ENCODE measurements at regions of chr10 and their contacts with region 1.

Region 1: GRCh38 chr10:44310762-44311562 is 73.9 kb downstream of the CXCL12 start:
- DNase-seq: peak; percentile 92 to 95
- ATAC-seq: peak; percentile 96
- H3K4me3 ChIP-seq: no peak overlapping the region
- H3K27ac ChIP-seq: no peak overlapping the region
- H3K4me1 ChIP-seq: no peaks in the 10 kb centered on the region
- H3K27me3 ChIP-seq: no peaks in the 10 kb centered on the region

Region 2: DNA sequence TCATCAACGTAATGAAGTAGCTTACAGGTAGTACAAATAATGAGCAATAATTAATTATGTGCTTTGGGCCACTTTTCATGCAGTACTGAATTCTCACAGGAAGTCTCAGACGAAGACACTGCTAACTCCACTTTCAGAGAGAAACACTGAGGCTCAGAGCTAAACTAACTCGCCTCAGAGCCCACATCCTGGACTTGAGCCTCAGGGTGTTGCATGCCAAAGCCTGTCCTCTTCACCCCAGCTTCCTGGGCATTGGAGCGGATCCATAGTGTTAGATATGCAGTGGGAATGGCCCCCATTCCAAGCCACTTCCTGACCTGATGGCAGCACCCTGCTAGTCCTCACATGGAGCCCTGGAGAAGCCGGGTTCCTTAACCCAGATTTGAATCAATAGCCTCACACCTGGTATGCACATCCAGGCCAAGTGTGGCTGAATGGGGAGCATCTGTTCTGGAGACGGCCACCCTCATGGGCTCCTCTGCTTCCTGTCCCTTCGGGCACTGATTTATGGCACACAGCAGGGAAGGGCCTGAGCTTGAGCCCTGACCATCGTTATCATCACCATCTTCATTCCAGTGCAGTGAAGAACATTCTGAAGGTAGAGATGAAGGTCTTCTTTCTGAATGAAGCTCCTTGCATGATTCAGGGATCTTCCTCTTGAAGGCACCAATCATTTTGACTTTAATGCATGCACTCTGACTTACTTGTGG is 397.1 kb before region 1 on chr10:
- intact Hi-C with region 1: loop called in 1 of 2 experiments (anchors 5 kb)
- DNase-seq: no peak
- ATAC-seq: no peak
- H3K4me3 ChIP-seq: no peak overlapping the region
- H3K27ac ChIP-seq: no peak overlapping the region
- H3K4me1 ChIP-seq: peaks cover 0 to 4% of the 10 kb centered on the region in 2 donors
- H3K27me3 ChIP-seq: no peaks in the 10 kb centered on the region

Region 3: GRCh38 chr10:44071479-44071878 is 239.5 kb before region 1 on chr10:
- intact Hi-C with region 1: loop called in 1 of 2 experiments (anchors 10 kb)
- DNase-seq: no peak
- ATAC-seq: no peak
- H3K4me3 ChIP-seq: no peak overlapping the region
- H3K27ac ChIP-seq: peak overlapping the region in 1 of 2 donors; percentile 76
- H3K4me1 ChIP-seq: no peaks in the 10 kb centered on the region
- H3K27me3 ChIP-seq: no peaks in the 10 kb centered on the region

Region 4: GRCh38 chr10:44132361-44133289 is 178.3 kb before region 1 on chr10:
- intact Hi-C with region 1: no loop called
- DNase-seq: no peak
- ATAC-seq: peak; percentile 71
- H3K4me3 ChIP-seq: no peak overlapping the region
- H3K27ac ChIP-seq: no peak overlapping the region
- H3K4me1 ChIP-seq: no peaks in the 10 kb centered on the region
- H3K27me3 ChIP-seq: no peaks in the 10 kb centered on the region

Region 5: DNA sequence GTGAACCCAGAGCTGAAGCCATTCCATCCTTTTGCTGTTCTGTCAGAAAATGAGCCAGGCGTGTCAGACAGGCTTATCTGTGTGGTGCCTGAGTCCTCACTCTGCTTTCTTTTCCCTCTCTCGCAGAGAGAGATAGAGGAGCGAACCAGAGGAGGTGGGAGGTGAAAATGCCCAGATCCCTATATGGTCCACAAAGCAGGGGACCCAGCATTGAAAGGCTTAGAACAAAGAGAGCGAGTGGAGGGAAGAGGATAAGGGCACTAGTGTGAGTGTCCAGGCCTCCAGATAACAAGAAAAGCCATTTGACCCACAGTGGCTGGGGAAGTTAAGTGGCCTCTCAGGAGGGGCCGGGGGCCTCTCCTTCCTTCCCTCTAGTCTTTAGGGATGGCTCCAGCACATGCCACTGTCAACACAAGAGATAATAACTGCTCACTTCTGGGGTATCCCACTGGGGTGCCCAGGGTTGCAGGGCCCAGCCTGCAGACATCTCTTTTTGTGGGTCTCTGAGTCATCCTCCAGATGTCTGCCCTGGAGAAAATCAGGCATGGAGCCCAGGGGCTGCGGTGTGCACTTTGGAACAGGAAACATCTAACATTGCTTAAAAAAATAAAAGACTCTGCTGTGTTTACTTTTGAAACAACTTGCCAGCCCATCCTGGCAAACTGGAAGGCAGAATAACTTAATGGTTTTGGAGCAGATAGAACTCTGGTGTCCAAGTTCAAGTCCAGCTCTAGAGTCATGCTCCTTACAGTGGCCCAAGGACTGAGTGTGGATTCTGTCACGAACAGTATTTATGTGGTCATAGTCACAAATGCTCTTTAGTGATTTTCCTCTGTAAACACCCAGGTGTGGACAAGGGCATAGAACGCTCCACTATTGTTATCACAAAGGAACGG is 115.6 kb before region 1 on chr10:
- intact Hi-C with region 1: loop called in 1 of 2 experiments (anchors 5 kb)
- DNase-seq: peak; percentile 87 to 90
- ATAC-seq: peak; percentile 82
- H3K4me3 ChIP-seq: no peak overlapping the region
- H3K27ac ChIP-seq: peak overlapping the region in 1 of 2 donors; percentile 32
- H3K4me1 ChIP-seq: no peaks in the 10 kb centered on the region
- H3K27me3 ChIP-seq: no peaks in the 10 kb centered on the region

Region 6: GRCh38 chr10:44386546-44387052 is 75.6 kb after region 1 on chr10:
- intact Hi-C with region 1: loop called in 1 of 2 experiments (anchors 5 kb)
- DNase-seq: peak; percentile 74 to 90
- ATAC-seq: peak; percentile 90
- H3K4me3 ChIP-seq: no peak overlapping the region
- H3K27ac ChIP-seq: no peak overlapping the region
- H3K4me1 ChIP-seq: no peaks in the 10 kb centered on the region
- H3K27me3 ChIP-seq: no peaks in the 10 kb centered on the region

Region 7: GRCh38 chr10:44581996-44582395 is 271.0 kb after region 1 on chr10:
- intact Hi-C with region 1: no loop called
- DNase-seq: no peak
- ATAC-seq: peak; percentile 35
- H3K4me3 ChIP-seq: no peak overlapping the region
- H3K27ac ChIP-seq: no peak overlapping the region
- H3K4me1 ChIP-seq: no peaks in the 10 kb centered on the region
- H3K27me3 ChIP-seq: no peaks in the 10 kb centered on the region

Region 8: DNA sequence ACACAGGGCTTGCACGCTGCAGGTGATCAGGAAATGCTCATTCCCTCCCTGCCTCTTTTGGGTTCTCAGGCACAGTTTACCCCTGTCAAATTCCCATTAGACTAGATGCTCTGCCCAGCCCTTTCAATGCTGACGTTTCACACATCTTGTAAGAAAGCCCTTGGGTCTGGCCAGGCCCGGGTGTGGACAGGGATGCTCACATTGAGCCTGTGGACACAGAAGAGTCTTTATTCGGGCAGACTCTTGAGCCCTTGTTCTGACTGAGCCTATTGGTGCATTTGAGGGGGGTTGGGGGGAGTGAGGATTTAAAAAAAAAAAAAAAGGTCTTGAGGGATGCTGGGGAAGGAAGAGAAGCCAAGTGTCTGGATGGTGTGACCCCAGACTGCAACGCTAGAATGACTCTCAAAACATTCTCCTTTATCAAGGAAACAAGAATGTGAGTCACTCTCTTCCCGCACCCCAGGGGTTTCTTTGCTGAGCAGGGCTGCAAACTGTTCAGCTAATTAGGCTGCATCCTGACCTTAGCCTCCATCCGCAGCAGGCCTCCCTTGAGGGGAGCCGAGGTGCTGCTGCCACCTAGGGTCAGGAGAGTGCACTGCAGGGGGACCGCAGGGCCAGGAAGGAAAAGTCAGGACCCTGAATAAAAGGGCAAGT is 546.5 kb after region 1 on chr10:
- intact Hi-C with region 1: loop called in 1 of 2 experiments (anchors 5 kb)
- DNase-seq: peak; percentile 75 to 85
- ATAC-seq: peak; percentile 81
- H3K4me3 ChIP-seq: no peak overlapping the region
- H3K27ac ChIP-seq: no peak overlapping the region
- H3K4me1 ChIP-seq: no peaks in the 10 kb centered on the region
- H3K27me3 ChIP-seq: no peaks in the 10 kb centered on the region